ENCODE measurements at regions of chr17 and their contacts with region 1.

Region 1: GRCh38 chr17:7336240-7337175 is at the start of gene ACAP1:
- DNase-seq: no peak
- H3K4me3 ChIP-seq: no peak within 1 kb of the TSS
- H3K27ac ChIP-seq: no peak within 1 kb of the TSS
- H3K27me3 ChIP-seq: peaks cover 12% of the 10 kb centered on the region
- CTCF ChIP-seq: no peak
- polyA plus RNA-seq, gene ACAP1: 0.35 and 0.74 TPM in 2 replicates

Region 2: DNA sequence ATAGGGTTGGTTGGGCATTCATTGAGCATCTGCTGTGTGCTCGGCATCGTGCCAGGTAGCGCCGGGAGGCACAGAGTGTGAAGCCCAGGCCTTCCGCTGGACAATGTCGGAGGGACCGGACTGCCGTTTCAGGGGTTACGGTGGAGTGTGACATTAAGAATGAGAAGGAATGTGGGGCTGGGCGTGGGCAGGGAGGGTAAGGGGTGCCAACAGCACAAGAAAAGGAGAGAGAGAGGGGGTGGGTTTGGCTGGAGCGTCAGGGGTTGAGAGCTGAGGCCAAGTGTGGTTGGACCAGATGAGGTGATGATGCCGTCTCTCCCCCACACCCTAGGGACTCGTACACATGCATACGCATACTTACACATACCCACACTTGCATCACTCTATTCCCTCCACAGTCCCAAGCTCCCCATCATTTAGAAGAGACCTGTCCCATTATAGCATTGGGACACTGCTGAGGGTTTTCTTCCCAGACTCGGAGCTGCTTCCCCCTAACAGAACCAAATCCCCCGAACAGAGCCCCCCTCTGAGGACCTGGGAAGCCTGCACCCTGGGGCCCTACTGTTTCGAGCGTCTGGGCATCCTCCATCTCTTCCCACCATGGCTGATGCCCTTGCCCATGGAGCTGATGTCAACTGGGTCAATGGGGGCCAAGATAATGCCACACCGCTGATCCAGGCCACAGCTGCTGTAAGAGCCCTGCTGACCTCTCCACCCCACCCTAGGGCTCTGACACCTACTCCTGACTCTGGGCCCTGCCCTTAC is 12.2 kb after region 1 on chr17:
- CTCF ChIA-PET with region 1: interaction called, 12 read pairs
- POLR2A ChIA-PET with region 1: interaction called, 3 read pairs
- DNase-seq: no peak
- H3K4me3 ChIP-seq: no peak overlapping the region
- H3K27ac ChIP-seq: no peak overlapping the region
- H3K27me3 ChIP-seq: peaks cover 3% of the 10 kb centered on the region
- CTCF ChIP-seq: no peak

Measured in AG04450 (cell line).